Left lung (tissue), 14 donors: ENCODE measurements at regions of chr2 and their contacts with region 1.

Region 1: DNA sequence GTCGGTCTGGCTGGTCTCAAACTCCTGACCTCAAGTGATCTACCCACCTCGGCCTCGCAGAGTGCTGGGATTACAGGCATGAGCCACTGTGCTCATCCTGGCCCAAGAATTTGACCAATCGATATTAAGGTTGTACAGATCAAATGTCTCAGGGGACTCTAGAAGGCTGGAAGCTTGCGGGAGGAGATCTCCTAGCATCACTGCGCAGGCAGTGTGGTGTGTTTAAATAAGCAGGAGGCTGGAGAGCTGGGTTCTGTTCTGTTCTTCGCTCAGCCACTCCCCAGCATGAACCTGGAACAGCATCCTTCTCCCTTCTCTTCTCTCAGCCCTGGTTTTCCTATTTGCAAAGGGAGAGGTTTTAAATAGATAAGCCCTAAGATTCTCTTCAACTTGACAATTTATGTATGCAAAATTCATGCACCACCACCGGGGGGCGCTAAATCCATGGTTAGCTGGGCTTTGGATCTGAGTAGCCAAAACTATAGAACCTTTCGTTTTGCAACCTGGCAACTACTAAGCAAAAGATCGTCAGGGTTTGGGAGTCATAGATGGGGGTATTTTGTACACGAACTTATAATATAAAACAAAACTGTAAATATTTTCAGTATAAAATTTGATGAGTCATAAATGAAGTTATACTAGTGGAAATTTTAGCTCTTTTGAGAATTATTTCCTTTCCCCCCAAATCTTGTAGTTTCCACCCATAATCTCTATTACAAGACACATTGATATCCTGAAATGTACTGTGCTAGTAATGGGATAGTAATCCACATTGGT is 60.6 kb downstream of the SLC16A14 start:
- DNase-seq: peak; percentile 50 to 86 (median 74)
- ATAC-seq: peak; percentile 92
- H3K4me3 ChIP-seq: no peak overlapping the region
- H3K27ac ChIP-seq: no peak overlapping the region
- H3K4me1 ChIP-seq: peaks cover 0 to 9% of the 10 kb centered on the region in 2 donors
- H3K27me3 ChIP-seq: no peaks in the 10 kb centered on the region
- CTCF ChIP-seq: peak; percentile 68 to 80

Region 2: DNA sequence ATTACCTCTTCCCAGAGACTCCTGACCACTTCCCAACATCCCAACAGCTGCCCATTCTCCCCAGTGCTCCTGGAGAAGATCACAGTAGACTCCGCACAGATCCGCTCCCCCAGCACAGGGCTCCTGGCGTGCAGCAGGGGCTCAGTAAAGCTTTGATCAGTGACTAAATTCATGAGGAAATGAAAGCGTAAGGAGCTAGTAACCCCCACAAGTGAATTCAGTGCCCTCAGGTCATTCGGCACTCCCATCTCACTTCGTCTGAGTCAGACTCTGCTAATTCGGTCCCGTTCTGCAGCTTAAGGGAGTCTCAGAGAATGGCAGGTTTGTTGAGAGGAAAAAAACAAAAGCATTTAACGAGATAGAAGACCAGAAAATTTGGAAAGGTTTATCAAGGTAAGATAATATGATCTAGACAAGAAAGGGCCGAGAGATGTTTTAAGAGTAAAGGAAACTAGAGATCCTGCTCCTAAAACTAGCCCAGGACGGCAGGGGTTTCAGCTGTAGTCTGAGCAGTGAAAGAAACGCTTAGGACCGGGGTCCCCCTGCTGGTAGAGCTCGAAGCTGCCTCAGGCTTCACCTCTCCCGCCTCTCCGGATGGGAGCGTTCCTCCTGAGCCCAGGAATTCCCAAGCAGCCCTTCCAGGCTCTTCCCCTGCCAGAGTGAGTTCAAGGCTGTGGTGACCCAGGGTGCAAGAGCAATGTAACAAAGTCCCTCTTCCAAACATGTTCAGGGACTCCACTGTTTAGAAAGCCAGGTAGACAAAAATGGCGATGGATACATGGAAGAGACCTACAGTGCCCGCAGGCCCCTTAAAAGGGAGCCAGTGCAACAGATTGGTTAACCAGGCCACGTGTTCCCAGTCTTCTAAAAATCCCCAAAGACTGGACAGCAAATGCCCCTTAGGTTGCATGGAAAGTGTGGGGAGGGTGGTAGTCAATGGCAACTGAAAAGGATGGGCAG is 421.1 kb before region 1 on chr2:
- intact Hi-C with region 1: no loop called
- DNase-seq: peak; percentile 70 to 87 (median 79)
- ATAC-seq: peak; percentile 100
- H3K4me3 ChIP-seq: peak overlapping the region in 1 of 2 donors; percentile 6
- H3K27ac ChIP-seq: no peak overlapping the region
- H3K4me1 ChIP-seq: no peaks in the 10 kb centered on the region
- H3K27me3 ChIP-seq: no peaks in the 10 kb centered on the region
- CTCF ChIP-seq: peak; percentile 72 to 80

Region 3: GRCh38 chr2:230160112-230160660 is 152.1 kb after region 1 on chr2:
- intact Hi-C with region 1: loop called in 1 of 2 experiments (anchors 5 kb)
- DNase-seq: peak in 3 of 4 donors; percentile 36 to 58 (median 54)
- ATAC-seq: peak; percentile 94
- H3K4me3 ChIP-seq: no peak overlapping the region
- H3K27ac ChIP-seq: no peak overlapping the region
- H3K4me1 ChIP-seq: peaks cover 0 to 9% of the 10 kb centered on the region in 2 donors
- H3K27me3 ChIP-seq: no peaks in the 10 kb centered on the region
- CTCF ChIP-seq: peak; percentile 54 to 89